Natural killer cell (primary cell): ENCODE measurements at regions of chr21 and their contacts with region 1.

Region 1: GRCh38 chr21:33976082-33977016 is 60.7 kb upstream of the ATP5PO start:
- DNase-seq: peak; percentile 26 to 75
- ATAC-seq: peak; percentile 43 to 60 (median 53)
- H3K4me3 ChIP-seq: no peak overlapping the region
- H3K4me3 Mint-ChIP-seq: peak overlapping the region; percentile 76
- H3K27ac ChIP-seq: peak overlapping the region; percentile 95
- H3K27ac Mint-ChIP-seq: peak overlapping the region; percentile 93 to 98
- H3K4me1 ChIP-seq: peaks cover 44% of the 10 kb centered on the region
- H3K4me1 Mint-ChIP-seq: peaks cover 61 to 66% of the 10 kb centered on the region in 2 donors
- H3K27me3 ChIP-seq: no peaks in the 10 kb centered on the region
- H3K27me3 Mint-ChIP-seq: no peaks in the 10 kb centered on the region
- CTCF ChIP-seq: no peak

Region 2: GRCh38 chr21:33801424-33802420 is 174.6 kb before region 1 on chr21:
- intact Hi-C with region 1: no loop called
- DNase-seq: no peak
- ATAC-seq: no peak
- H3K4me3 ChIP-seq: no peak overlapping the region
- H3K4me3 Mint-ChIP-seq: no peak overlapping the region
- H3K27ac ChIP-seq: no peak overlapping the region
- H3K27ac Mint-ChIP-seq: no peak overlapping the region
- H3K4me1 ChIP-seq: no peaks in the 10 kb centered on the region
- H3K4me1 Mint-ChIP-seq: no peaks in the 10 kb centered on the region
- H3K27me3 ChIP-seq: no peaks in the 10 kb centered on the region
- H3K27me3 Mint-ChIP-seq: no peaks in the 10 kb centered on the region
- CTCF ChIP-seq: no peak

Region 3: DNA sequence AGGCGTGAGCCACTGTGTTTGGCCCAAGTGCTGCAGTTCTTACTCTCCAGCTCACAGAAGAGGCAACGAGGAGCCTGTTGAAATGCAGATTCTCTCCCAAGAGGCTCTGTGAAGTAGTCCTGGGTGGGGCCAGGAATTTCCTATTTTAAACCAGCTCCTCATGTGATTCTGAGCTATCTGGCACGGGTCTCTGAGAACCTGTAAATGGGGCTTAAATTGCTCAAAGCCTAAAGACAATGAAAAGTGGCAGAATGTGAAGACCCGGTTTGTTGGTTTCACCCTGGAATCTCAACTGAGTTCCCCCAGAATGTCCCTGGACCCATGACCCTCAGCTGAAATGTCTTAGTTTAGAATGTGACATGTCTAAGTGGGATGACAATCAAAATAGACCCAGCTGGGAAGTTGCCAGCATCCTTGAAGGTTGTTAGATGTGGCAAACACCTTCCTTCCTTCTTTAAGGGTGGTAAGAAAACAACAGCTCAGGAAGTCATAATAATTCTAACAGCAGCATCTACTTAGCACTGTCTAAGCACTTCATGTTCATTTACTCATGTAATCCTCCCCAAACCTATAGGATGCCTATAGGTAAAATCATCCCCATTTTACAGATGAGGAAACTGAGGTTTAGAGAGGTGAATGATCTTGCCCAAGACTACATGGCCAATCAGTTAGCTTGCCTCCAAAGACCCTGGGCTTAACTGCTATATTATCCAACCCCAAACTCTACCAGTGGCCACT is 39.9 kb before region 1 on chr21:
- intact Hi-C with region 1: loop called (anchors 5 kb)
- DNase-seq: peak in 1 of 2 donors; percentile 86
- ATAC-seq: peak; percentile 49 to 63 (median 53)
- H3K4me3 ChIP-seq: no peak overlapping the region
- H3K4me3 Mint-ChIP-seq: no peak overlapping the region
- H3K27ac ChIP-seq: peak overlapping the region; percentile 61
- H3K27ac Mint-ChIP-seq: peak overlapping the region; percentile 71 to 76
- H3K4me1 ChIP-seq: peaks cover 56% of the 10 kb centered on the region
- H3K4me1 Mint-ChIP-seq: peaks cover 30 to 32% of the 10 kb centered on the region in 2 donors
- H3K27me3 ChIP-seq: no peaks in the 10 kb centered on the region
- H3K27me3 Mint-ChIP-seq: no peaks in the 10 kb centered on the region
- CTCF ChIP-seq: no peak

Region 4: DNA sequence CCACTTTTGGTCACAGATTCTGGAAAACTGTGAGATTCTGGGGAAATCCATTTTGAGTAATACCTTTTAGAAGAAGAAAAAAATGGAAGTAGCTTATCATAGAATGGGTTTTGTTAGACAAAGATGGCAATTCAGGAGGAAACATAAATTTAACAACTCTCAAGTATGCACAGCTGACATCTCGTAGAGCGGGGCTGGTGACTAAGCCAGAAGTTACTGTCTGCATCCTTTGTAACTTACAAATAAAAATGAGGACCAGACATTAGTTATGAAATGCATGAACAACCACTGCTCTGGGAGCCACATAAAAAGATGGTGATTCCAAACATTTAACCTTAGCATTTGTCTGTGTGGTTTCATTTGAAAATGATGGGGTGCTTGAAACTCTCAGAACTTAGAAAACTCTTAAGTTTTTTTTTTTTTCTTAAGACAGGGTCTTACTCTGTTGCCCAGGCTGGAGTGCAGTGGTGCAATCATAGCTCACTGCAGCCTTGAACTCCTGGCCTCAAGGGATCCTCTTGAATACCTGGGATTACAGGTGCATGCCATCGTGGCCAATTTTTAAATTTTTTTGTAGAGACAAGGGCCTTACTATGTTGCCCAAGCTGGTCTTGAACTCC is 11.5 kb before region 1 on chr21:
- intact Hi-C with region 1: no loop called
- DNase-seq: no peak
- ATAC-seq: no peak
- H3K4me3 ChIP-seq: no peak overlapping the region
- H3K4me3 Mint-ChIP-seq: no peak overlapping the region
- H3K27ac ChIP-seq: no peak overlapping the region
- H3K27ac Mint-ChIP-seq: no peak overlapping the region
- H3K4me1 ChIP-seq: no peaks in the 10 kb centered on the region
- H3K4me1 Mint-ChIP-seq: peaks cover 10 to 12% of the 10 kb centered on the region in 2 donors
- H3K27me3 ChIP-seq: no peaks in the 10 kb centered on the region
- H3K27me3 Mint-ChIP-seq: no peaks in the 10 kb centered on the region
- CTCF ChIP-seq: no peak

Region 5: DNA sequence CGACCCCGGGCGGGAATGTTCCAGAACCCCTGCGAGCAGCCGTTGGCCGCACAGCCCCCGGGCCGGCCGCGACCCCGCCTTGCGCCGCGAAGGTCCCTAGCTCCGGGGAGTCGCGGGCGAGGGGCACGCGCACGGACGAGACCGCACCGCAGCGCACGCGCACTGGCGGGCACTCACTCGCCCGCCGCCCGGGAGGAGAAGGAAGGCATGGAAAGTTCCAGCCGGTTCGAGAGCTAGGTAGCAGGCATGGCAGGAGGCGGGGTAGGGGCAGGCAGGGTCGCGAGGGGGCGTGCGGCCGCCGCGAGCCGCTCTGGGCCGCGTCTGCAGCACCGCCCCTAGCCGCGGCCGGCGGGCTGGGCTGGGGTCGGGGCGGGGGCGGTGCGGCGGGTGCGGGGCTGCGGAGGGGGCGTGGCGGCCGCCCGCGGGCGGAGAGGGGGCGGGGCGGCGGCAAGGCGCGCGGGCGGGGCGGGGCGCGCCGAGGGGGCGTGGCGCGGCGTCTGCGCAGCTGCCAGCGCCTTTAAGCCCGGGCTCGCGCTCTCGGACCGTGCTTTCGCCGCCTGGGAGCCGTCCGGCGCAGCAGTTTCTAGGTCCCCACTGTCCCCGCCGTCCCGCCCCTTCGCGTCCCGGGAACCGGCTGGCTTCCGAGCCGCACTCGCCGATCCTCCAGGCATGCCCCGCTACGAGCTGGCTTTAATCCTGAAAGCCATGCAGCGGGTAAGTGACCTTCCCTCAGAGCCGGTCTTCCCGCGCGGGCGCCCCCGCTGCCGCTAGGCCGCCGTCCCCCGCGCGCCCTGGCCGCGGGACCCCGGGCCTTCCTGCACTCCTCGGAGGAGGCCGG is 96.9 kb after region 1 on chr21 and contains the starts of genes MRPS6 and SLC5A3:
- intact Hi-C with region 1: loop called (anchors 5 kb)
- DNase-seq: peak; percentile 70 to 86
- ATAC-seq: peak; percentile 76 to 87 (median 79)
- H3K4me3 ChIP-seq: peak within 1 kb of the TSS; percentile 76
- H3K4me3 Mint-ChIP-seq: peak within 1 kb of the TSS; percentile 95
- H3K27ac ChIP-seq: peak within 1 kb of the TSS; percentile 80
- H3K27ac Mint-ChIP-seq: peak within 1 kb of the TSS; percentile 86 to 89
- H3K4me1 ChIP-seq: peaks cover 21% of the 10 kb centered on the region
- H3K4me1 Mint-ChIP-seq: peaks cover 50 to 54% of the 10 kb centered on the region in 2 donors
- H3K27me3 ChIP-seq: no peaks in the 10 kb centered on the region
- H3K27me3 Mint-ChIP-seq: no peaks in the 10 kb centered on the region
- CTCF ChIP-seq: no peak
- total RNA-seq, gene MRPS6: 42.7 to 54.5 (median 44.3) TPM
- total RNA-seq, gene SLC5A3: 14.5 to 25.1 (median 17.9) TPM

Region 6: DNA sequence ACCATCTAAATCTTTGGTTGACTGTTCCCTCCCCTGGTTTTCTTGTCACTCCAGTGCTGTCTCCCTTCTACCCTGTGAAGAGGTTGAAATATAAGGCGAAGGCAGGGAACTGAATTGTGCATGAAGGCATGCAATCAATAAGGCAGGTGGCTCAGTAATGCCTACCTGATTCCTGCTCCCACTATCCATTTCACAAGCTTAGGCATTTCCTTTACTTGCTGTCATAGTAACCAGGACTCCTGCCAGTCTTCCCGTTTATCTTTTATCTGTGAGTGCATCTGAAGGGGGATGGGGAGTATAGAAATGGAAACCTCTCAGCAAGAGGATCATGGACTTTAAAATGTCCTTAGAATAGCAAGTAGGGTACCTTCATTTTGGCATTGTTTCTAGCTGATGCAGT is 137.5 kb after region 1 on chr21:
- intact Hi-C with region 1: no loop called
- DNase-seq: no peak
- ATAC-seq: no peak
- H3K4me3 ChIP-seq: no peak overlapping the region
- H3K4me3 Mint-ChIP-seq: no peak overlapping the region
- H3K27ac ChIP-seq: no peak overlapping the region
- H3K27ac Mint-ChIP-seq: peak overlapping the region; percentile 34 to 67
- H3K4me1 ChIP-seq: no peaks in the 10 kb centered on the region
- H3K4me1 Mint-ChIP-seq: peaks cover 75 to 79% of the 10 kb centered on the region in 2 donors
- H3K27me3 ChIP-seq: no peaks in the 10 kb centered on the region
- H3K27me3 Mint-ChIP-seq: no peaks in the 10 kb centered on the region
- CTCF ChIP-seq: no peak

Region 7: GRCh38 chr21:34148419-34148804 is 172.1 kb after region 1 on chr21:
- intact Hi-C with region 1: no loop called
- DNase-seq: no peak
- ATAC-seq: no peak
- H3K4me3 ChIP-seq: no peak overlapping the region
- H3K4me3 Mint-ChIP-seq: no peak overlapping the region
- H3K27ac ChIP-seq: no peak overlapping the region
- H3K27ac Mint-ChIP-seq: no peak overlapping the region
- H3K4me1 ChIP-seq: no peaks in the 10 kb centered on the region
- H3K4me1 Mint-ChIP-seq: peaks cover 27 to 45% of the 10 kb centered on the region in 2 donors
- H3K27me3 ChIP-seq: no peaks in the 10 kb centered on the region
- H3K27me3 Mint-ChIP-seq: no peaks in the 10 kb centered on the region
- CTCF ChIP-seq: no peak